ENCODE measurements at regions of chr15 and their contacts with region 1.

Region 1: GRCh38 chr15:70722266-70723121 is 40.9 kb downstream of the UACA start:
- DNase-seq: no peak
- ATAC-seq: no peak
- H3K4me3 Mint-ChIP-seq: no peak overlapping the region
- H3K27ac Mint-ChIP-seq: no peak overlapping the region
- H3K4me1 Mint-ChIP-seq: peaks cover 12% of the 10 kb centered on the region
- H3K27me3 Mint-ChIP-seq: no peaks in the 10 kb centered on the region
- CTCF ChIP-seq: peak; percentile 62

Region 2: DNA sequence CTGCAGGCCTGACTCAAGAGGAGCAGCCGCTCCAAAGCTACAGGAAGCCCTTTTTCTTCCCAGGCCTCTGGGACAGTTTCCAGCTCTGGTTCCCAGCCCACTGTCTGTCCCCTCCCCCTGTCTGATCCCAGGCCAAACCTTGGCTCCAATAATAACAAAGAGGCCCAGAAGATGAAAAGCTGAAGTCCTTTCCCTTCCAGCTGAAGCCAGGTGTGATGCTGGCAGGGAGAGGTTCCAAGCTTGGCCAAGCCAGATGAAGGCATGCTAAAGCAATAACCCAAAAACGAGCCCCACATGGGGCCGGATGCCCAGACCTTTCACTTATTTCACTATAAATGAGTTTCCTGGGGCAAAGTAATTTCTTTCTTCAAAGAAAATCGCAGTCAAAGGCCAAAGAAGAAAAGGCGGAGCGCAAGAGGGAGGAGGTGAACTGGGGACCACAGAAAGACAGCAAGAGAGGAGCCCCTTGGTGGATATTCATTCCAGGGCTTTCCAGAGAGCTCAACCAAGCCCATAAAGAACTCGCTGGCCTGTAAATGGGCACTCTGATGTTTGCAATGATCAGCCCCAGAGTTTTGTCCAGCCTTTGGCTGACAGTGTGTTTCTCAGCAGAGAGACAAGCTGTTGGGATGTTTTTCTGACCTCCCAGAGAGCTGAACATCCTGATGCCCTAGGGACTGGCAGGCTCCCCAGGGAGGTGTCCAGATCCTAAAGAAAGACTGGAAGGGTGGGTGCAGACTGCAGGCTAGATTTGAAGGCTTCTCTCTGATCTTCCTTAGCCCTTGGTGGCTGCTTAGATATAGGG is 116.7 kb before region 1 on chr15:
- CTCF ChIA-PET with region 1: interaction called, 10 read pairs
- POLR2A ChIA-PET with region 1: no interaction called
- DNase-seq: no peak
- ATAC-seq: peak; percentile 63
- H3K4me3 Mint-ChIP-seq: peak overlapping the region; percentile 20; the same call in 1 of the 2 replicates
- H3K27ac Mint-ChIP-seq: no peak overlapping the region
- H3K4me1 Mint-ChIP-seq: peaks cover 27% of the 10 kb centered on the region
- H3K27me3 Mint-ChIP-seq: no peaks in the 10 kb centered on the region; the same call in 1 of the 2 replicates
- CTCF ChIP-seq: no peak

Region 3: DNA sequence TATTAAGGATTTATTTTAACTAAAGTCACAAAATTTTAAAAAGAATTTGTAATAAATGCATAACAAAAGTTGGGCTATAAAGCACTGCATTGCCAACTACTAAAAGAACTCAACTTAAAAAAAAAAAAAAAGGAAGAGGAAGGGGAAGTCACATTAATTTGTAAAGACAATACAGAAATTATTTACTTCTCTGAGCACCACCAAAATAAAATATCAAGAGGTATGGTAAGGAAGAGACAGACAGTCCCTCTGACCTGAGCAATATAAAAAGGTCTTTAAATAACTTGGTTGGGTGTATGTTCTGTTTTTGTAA is 42.6 kb before region 1 on chr15:
- CTCF ChIA-PET with region 1: interaction called, 44 read pairs
- POLR2A ChIA-PET with region 1: no interaction called
- DNase-seq: no peak
- ATAC-seq: no peak
- H3K4me3 Mint-ChIP-seq: no peak overlapping the region
- H3K27ac Mint-ChIP-seq: no peak overlapping the region
- H3K4me1 Mint-ChIP-seq: peaks cover 5% of the 10 kb centered on the region; the same call in 1 of the 2 replicates
- H3K27me3 Mint-ChIP-seq: no peaks in the 10 kb centered on the region
- CTCF ChIP-seq: no peak

Region 4: DNA sequence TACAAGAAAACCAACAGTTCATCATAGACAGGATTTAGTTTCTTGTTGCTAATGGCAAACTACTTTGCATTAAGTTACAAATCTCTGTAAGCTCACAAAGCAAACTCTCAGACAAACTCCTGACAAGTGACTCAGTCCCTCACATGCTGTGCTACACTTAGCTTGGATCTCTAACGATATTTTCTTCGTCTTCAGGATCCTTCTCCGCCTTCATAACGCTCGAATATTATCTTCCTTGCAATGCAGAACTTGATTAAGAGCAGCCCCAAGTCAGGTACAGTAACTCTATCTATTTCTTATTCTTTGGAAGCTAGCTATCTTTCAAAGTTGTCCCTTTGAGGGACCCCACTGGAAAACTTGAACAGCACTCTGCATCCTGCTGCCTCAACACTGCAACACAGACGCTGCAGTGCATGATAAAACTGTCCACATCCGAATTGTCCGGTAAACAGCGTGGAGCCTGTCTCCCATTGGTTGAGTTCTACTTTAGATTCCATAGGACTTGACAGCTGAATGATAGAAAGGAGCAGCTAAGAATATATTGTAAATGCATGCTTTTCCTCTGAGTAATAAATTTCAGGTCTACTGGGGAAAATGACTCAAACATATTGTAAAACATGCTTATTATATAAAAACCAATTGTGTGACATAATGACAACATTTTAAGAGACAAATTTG is 20.5 kb before region 1 on chr15:
- CTCF ChIA-PET with region 1: interaction called, 34 read pairs
- POLR2A ChIA-PET with region 1: no interaction called
- DNase-seq: no peak
- ATAC-seq: no peak
- H3K4me3 Mint-ChIP-seq: no peak overlapping the region
- H3K27ac Mint-ChIP-seq: peak overlapping the region; percentile 3
- H3K4me1 Mint-ChIP-seq: peaks cover 55% of the 10 kb centered on the region
- H3K27me3 Mint-ChIP-seq: no peaks in the 10 kb centered on the region
- CTCF ChIP-seq: no peak

Region 5: GRCh38 chr15:70748281-70748747 is 25.8 kb after region 1 on chr15:
- CTCF ChIA-PET with region 1: interaction called, 21 read pairs
- POLR2A ChIA-PET with region 1: no interaction called
- DNase-seq: no peak
- ATAC-seq: no peak
- H3K4me3 Mint-ChIP-seq: no peak overlapping the region
- H3K27ac Mint-ChIP-seq: no peak overlapping the region
- H3K4me1 Mint-ChIP-seq: peaks cover 15% of the 10 kb centered on the region
- H3K27me3 Mint-ChIP-seq: no peaks in the 10 kb centered on the region
- CTCF ChIP-seq: no peak

Measured in WTC11 (cell line).